K562 (cell line): ENCODE measurements at regions of chr1 and their contacts with region 1.

Region 1: GRCh38 chr1:246161626-246162025 is 345.5 kb downstream of the SMYD3 start:
- DNase-seq: no peak
- ATAC-seq: no peak
- H3K4me3 ChIP-seq: no peak overlapping the region
- H3K27ac ChIP-seq: no peak overlapping the region
- H3K4me1 ChIP-seq: peaks cover under 1 to 47% of the 10 kb centered on the region in 2 experiments; a peak in 4 of 5 replicates
- H3K27me3 ChIP-seq: no peaks in the 10 kb centered on the region; a peak in 1 of 5 replicates
- CTCF ChIP-seq: no peak
- EP300 ChIP-seq: no peak
- POLR2A ChIP-seq: no peak
- RAD21 ChIP-seq: no peak

Region 2: DNA sequence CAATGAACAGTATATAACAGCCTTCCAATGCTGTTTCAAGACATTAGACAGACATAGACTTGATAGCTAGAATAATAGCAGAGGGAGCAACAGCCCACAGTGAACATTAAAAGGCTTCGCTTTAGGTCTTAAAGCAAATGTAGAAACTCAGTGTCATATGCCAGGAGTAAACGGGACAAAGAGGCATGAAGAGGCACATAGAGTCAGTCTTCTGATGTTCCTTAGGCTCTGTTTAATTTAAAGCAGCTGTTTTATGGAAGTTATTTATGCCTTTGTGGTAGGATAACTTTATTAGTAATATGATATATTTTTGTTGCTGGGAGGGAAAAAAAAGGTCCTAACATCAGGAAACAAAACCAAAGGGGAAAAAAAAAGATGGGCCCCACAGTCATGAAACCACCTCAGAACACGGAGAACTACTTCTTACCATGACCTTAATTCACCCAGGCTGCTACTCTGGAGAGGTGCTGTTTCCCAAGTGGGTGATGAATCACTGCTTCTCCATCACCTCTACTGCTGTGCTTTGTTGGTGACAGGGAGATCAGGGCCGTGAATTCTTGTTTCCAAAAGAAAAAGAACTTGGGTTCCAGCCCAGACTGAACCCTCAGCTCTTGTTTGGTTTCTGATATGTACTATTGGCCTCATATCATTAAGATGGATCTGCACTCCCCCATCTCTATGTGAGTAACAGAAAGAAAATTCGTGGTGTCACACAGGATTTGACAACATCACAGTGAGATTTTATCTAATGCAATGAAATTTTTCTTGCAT is 389.9 kb before region 1 on chr1:
- CTCF ChIA-PET with region 1: no interaction called
- POLR2A ChIA-PET with region 1: no interaction called
- in situ Hi-C with region 1: no loop called
- intact Hi-C with region 1: no loop called
- DNase-seq: no peak
- ATAC-seq: no peak
- H3K4me3 ChIP-seq: no peak overlapping the region
- H3K27ac ChIP-seq: no peak overlapping the region
- H3K4me1 ChIP-seq: 0 out of 5 replicates have a peak, but pooled peaks cover 0 to 3% of the 10 kb centered on the region in 2 experiments
- H3K27me3 ChIP-seq: no peaks in the 10 kb centered on the region
- CTCF ChIP-seq: no peak
- EP300 ChIP-seq: no peak
- POLR2A ChIP-seq: no peak
- RAD21 ChIP-seq: no peak

Region 3: GRCh38 chr1:246117066-246117791 is 44.4 kb before region 1 on chr1:
- CTCF ChIA-PET with region 1: no interaction called
- POLR2A ChIA-PET with region 1: interaction called, 4 read pairs
- in situ Hi-C with region 1: no loop called
- intact Hi-C with region 1: loop called (anchors 2 kb)
- DNase-seq: peak; percentile 53 to 85 (median 63)
- ATAC-seq: peak; percentile 88
- H3K4me3 ChIP-seq: no peak overlapping the region
- H3K27ac ChIP-seq: peak overlapping the region; percentile 38; the same call in 1 of the 3 replicates
- H3K4me1 ChIP-seq: peaks cover 4 to 38% of the 10 kb centered on the region in 2 experiments; a peak in 4 of 5 replicates
- H3K27me3 ChIP-seq: no peaks in the 10 kb centered on the region
- CTCF ChIP-seq: peak; percentile 62 to 74 (median 72)
- EP300 ChIP-seq: no peak
- POLR2A ChIP-seq: no peak
- RAD21 ChIP-seq: peak; percentile 73 to 82; a peak in 3 of 4 replicates

Region 4: DNA sequence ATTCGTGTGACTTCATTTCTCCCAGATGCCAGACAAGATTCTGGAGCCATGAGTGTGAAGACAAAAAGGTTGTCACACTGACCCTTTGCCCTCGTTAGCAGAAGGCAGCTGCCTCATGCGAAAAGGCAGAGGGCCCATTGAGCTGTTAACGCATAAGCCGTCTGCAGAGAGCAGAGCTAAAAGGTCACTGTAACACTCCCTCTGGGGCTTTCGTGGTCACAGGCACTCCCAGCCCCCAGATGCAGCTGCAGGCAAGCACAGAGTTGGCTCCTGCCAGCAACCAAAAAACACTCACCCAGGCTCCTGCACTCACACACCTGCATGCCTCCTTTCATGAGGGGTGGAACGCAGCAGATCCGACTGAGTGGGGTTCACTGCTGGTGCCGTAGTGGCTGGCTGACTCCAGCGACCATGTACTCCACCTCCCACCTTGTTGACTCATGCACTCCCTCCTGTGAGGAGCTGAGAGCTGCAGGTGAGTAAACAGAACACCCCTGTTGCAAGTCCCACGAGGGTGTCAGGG is 57.9 kb after region 1 on chr1:
- CTCF ChIA-PET with region 1: no interaction called
- POLR2A ChIA-PET with region 1: no interaction called
- in situ Hi-C with region 1: no loop called
- intact Hi-C with region 1: no loop called
- DNase-seq: peak in 1 of 4 experiments; percentile 34
- ATAC-seq: no peak
- H3K4me3 ChIP-seq: no peak overlapping the region
- H3K27ac ChIP-seq: no peak overlapping the region
- H3K4me1 ChIP-seq: peaks cover 14 to 24% of the 10 kb centered on the region in 2 experiments
- H3K27me3 ChIP-seq: no peaks in the 10 kb centered on the region
- CTCF ChIP-seq: no peak
- EP300 ChIP-seq: no peak
- POLR2A ChIP-seq: no peak
- RAD21 ChIP-seq: no peak